H1 (cell line): ENCODE measurements at regions of chr16 and their contacts with region 1.

Region 1: DNA sequence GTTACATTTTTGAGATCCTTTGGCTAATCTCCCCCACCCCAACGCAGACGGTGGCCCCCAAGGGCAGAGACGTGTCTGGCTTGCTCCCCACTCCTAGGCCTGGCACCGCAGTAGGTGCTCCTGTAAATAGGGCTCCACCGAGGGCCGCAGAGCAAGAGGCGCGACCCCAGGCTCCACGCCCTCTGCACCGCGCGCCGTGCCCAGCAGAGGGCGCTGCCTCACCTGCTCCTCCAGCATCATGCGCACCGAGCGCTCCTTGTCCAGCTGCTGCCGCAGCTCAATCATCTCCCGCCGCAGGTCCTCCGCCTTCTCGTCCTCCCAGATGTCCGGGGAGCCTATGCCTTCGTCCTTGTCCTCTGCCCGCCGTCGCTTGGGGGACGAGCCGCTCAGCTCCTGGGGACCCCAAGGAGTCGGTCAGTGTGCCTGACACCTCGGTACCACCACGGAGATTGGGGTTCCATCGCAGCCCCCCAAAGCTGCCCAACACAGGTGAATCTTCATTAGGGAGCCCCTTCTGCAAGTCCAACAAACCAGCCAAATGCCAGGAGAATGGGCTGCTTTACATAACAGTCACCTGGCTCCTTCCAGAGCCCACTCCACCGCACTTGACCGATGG is 11.2 kb downstream of the TFAP4 start:
- DNase-seq: peak in 1 of 2 experiments; percentile 95
- H3K4me3 ChIP-seq: no peak overlapping the region
- H3K27ac ChIP-seq: no peak overlapping the region
- H3K4me1 ChIP-seq: peaks cover 0 to 11% (median 8%) of the 10 kb centered on the region in 4 experiments; a peak in 5 of 7 replicates
- H3K27me3 ChIP-seq: no peaks in the 10 kb centered on the region
- CTCF ChIP-seq: peak; percentile 86 to 98 (median 97)
- EP300 ChIP-seq: no peak
- POLR2A ChIP-seq: no peak
- RAD21 ChIP-seq: peak; percentile 80 to 83

Region 2: GRCh38 chr16:4288148-4288921 is 26.7 kb after region 1 on chr16:
- CTCF ChIA-PET with region 1: interaction called, 29 read pairs
- POLR2A ChIA-PET with region 1: interaction called, 403 read pairs
- DNase-seq: peak in 1 of 2 experiments; percentile 98
- H3K4me3 ChIP-seq: peak overlapping the region in 2 of 4 experiments; percentile 2 to 16; a peak in 2 of 8 replicates
- H3K27ac ChIP-seq: peak overlapping the region; percentile 38; the same call in 1 of the 2 replicates
- H3K4me1 ChIP-seq: peaks cover 3 to 17% (median 8%) of the 10 kb centered on the region in 4 experiments
- H3K27me3 ChIP-seq: no peaks in the 10 kb centered on the region
- CTCF ChIP-seq: peak; percentile 94 to 98 (median 98)
- EP300 ChIP-seq: no peak
- POLR2A ChIP-seq: no peak
- RAD21 ChIP-seq: peak; percentile 84 to 93

Region 3: GRCh38 chr16:4298761-4299522 is 37.3 kb after region 1 on chr16:
- CTCF ChIA-PET with region 1: interaction called, 16 read pairs
- POLR2A ChIA-PET with region 1: interaction called, 403 read pairs
- DNase-seq: peak in 1 of 2 experiments; percentile 66
- H3K4me3 ChIP-seq: no peak overlapping the region
- H3K27ac ChIP-seq: no peak overlapping the region; the same call in 1 of the 2 replicates
- H3K4me1 ChIP-seq: peaks cover 4 to 13% (median 5%) of the 10 kb centered on the region in 4 experiments
- H3K27me3 ChIP-seq: no peaks in the 10 kb centered on the region
- CTCF ChIP-seq: no peak
- EP300 ChIP-seq: no peak
- POLR2A ChIP-seq: no peak
- RAD21 ChIP-seq: no peak

Region 4: GRCh38 chr16:4330277-4330874 is 68.7 kb after region 1 on chr16:
- CTCF ChIA-PET with region 1: interaction called, 132 read pairs
- POLR2A ChIA-PET with region 1: interaction called, 4 read pairs
- DNase-seq: peak in 1 of 2 experiments; percentile 91
- H3K4me3 ChIP-seq: no peak overlapping the region
- H3K27ac ChIP-seq: no peak overlapping the region
- H3K4me1 ChIP-seq: peaks cover 5 to 14% (median 10%) of the 10 kb centered on the region in 4 experiments
- H3K27me3 ChIP-seq: no peaks in the 10 kb centered on the region
- CTCF ChIP-seq: peak; percentile 84 to 98 (median 97)
- EP300 ChIP-seq: no peak
- POLR2A ChIP-seq: no peak
- RAD21 ChIP-seq: peak; percentile 86 to 94

Region 5: DNA sequence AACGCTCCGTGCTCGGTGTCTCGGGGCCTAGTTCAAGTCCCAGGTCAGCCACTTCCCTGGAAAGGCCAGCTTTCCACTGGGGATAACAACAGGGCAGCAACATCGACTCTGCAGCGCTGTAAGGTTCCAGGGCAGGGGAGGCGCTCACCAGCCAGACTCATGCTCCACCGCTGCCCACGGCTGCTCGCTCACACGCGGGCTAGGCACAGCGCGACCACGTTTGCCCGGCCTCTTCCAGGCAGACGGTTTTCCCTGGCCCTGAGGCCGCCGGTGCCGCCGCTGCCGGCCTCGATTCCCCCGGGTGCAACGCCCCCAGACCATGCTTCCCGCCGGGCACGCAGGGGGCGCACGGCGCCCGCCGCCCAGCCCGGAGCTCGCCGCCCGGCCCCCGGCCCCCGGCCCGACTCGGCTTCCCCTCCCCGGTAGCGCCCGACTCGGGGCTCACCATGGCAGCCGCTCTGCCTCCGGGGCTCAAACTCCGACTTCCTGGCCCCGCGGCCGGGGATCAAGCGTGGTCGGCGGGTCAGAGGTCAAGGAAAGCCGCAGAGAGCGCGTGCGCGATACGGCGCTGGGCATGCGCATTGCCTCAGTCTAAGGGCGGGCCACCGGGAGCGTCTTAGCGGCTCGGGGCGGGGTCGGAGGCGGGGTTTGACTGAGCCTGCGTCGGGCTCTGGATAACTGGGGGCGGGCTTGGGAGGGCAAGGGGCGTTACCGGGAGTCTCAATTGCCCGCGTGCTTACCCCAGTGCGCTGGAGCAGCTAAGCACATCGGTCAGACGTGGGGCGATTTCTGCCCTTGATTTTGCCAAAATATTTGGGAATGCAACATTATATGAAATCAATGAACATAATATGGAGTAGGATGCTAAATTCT is 89.4 kb after region 1 on chr16 and contains the start of gene PAM16:
- CTCF ChIA-PET with region 1: interaction called, 16 read pairs
- POLR2A ChIA-PET with region 1: interaction called, 5 read pairs
- DNase-seq: peak; percentile 87 to 100
- H3K4me3 ChIP-seq: peak within 1 kb of the TSS; percentile 91 to 97 (median 96)
- H3K27ac ChIP-seq: peak within 1 kb of the TSS; percentile 85
- H3K4me1 ChIP-seq: peaks cover 0 to 4% (median 0%) of the 10 kb centered on the region in 4 experiments; a peak in 1 of 7 replicates
- H3K27me3 ChIP-seq: peaks cover 0 to 2% (median 0%) of the 10 kb centered on the region in 4 experiments; a peak in 1 of 7 replicates
- CTCF ChIP-seq: no peak
- EP300 ChIP-seq: no peak
- POLR2A ChIP-seq: peak in 1 of 2 experiments; percentile 76; a peak in 2 of 3 replicates
- RAD21 ChIP-seq: no peak
- total RNA-seq, gene PAM16: 78.3 and 84.4 TPM in 2 replicates